Sigmoid colon (tissue), 7 donors: ENCODE measurements at regions of chr12 and their contacts with region 1.

Region 1: DNA sequence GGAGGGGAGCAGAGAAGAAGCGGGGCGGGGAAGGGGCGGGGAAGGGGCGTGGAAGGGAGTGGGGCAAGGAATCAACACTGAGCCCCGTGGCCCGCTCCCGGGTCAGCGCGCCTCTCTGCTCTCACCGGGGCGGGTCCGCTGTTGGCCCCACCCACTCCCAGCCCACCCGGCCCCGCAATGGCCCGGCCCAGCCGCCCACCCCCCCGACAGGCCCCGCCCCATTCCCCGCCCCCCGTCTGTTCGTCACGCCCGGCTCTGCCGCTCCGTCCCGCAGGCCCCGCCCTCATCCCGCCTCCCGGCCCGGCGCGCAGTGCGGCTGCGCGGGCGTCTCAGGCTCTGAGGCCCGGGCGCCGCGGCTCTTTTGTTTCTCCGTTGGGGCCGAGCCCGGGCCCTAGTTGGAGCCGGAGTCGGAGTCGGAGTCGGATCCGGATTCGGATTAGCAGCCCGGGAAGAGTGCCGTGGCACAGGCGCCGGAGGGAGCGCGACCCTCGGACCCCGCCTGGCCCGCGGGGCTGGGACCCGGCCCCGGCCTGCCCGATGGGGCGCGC is at the start of gene ULK1:
- DNase-seq: peak; percentile 98
- H3K4me3 ChIP-seq: peak within 1 kb of the TSS; percentile 54 to 92 (median 85)
- H3K27ac ChIP-seq: peak within 1 kb of the TSS; percentile 86 to 100 (median 96)
- H3K4me1 ChIP-seq: peaks cover 0 to 44% (median 30%) of the 10 kb centered on the region in 4 donors
- H3K27me3 ChIP-seq: no peaks in the 10 kb centered on the region
- CTCF ChIP-seq: no peak
- EP300 ChIP-seq: no peak
- POLR2A ChIP-seq: peak; percentile 77 to 79
- total RNA-seq, gene ULK1: 13.2 to 29.1 (median 18.6) TPM

Region 2: GRCh38 chr12:131928711-131929580 is 34.6 kb after region 1 on chr12 and contains the start of gene PUS1:
- intact Hi-C with region 1: loop called (anchors 1 kb)
- DNase-seq: peak; percentile 97
- H3K4me3 ChIP-seq: peak within 1 kb of the TSS; percentile 58 to 93 (median 88)
- H3K27ac ChIP-seq: peak within 1 kb of the TSS; percentile 92 to 94 (median 93)
- H3K4me1 ChIP-seq: peaks cover 0 to 24% (median 16%) of the 10 kb centered on the region in 4 donors
- H3K27me3 ChIP-seq: no peaks in the 10 kb centered on the region
- CTCF ChIP-seq: no peak
- EP300 ChIP-seq: no peak
- POLR2A ChIP-seq: peak; percentile 7 to 37
- total RNA-seq, gene PUS1: 7.6 to 15.6 (median 8.9) TPM

Region 3: GRCh38 chr12:132071040-132071810 is 176.8 kb after region 1 on chr12:
- intact Hi-C with region 1: loop called (anchors 10 kb)
- DNase-seq: no peak
- H3K4me3 ChIP-seq: no peak overlapping the region
- H3K27ac ChIP-seq: no peak overlapping the region
- H3K4me1 ChIP-seq: no peaks in the 10 kb centered on the region
- H3K27me3 ChIP-seq: no peaks in the 10 kb centered on the region
- CTCF ChIP-seq: no peak
- EP300 ChIP-seq: no peak
- POLR2A ChIP-seq: no peak

Region 4: GRCh38 chr12:132327351-132328171 is 433.2 kb after region 1 on chr12:
- intact Hi-C with region 1: loop called (anchors 10 kb)
- DNase-seq: peak; percentile 95
- H3K4me3 ChIP-seq: peak overlapping the region in 3 of 4 donors; percentile 7 to 30 (median 16)
- H3K27ac ChIP-seq: peak overlapping the region in 3 of 4 donors; percentile 75 to 87 (median 78)
- H3K4me1 ChIP-seq: peaks cover 0 to 59% (median 51%) of the 10 kb centered on the region in 4 donors
- H3K27me3 ChIP-seq: peaks cover 25 to 48% (median 30%) of the 10 kb centered on the region in 3 donors
- CTCF ChIP-seq: no peak
- EP300 ChIP-seq: peak; percentile 58 to 97 (median 86)
- POLR2A ChIP-seq: no peak